Activated CD8-positive, alpha-beta T cell treated with anti-CD3 and anti-CD28 coated beads, Interleukin-2, amount 10 ng/mL, durations not matched to agents 7 days and 5 days (primary cell): ENCODE measurements at regions of chr9 and their contacts with region 1.

Region 1: DNA sequence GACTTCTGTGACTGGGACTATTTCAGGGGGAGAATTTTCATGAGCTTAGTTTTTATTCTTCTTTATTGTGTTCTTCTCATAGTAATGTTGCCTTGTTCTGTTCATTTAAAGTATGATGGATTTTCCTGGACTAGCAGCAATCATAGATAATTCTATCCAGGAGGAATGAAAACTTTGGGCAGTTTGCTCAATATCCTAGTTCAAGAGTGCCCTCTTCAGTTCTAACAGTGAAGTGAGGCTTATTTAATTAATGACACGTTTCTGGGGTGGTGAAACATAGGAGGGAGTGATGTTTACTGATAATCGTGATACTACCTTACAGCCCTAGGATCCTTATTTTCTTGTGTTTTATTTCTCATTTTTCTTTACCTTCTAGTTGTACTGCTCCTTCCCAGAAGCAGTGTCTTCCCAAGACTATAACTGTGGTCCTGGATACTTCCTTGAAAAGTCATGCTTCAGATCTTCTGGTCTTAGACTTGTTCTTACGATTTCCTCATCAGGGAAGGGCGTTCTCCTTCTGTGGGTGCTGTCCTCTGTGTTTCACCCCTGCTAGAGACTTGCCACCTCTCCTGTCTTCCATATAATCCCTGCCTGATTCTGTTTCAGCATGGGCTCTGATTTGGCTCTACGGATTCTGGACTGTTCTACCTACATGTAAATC is 57.4 kb downstream of the CFAP95 start:
- DNase-seq: no peak
- ATAC-seq: no peak
- H3K4me3 Mint-ChIP-seq: no peak overlapping the region
- H3K27ac Mint-ChIP-seq: no peak overlapping the region
- H3K4me1 Mint-ChIP-seq: no peaks in the 10 kb centered on the region
- H3K27me3 Mint-ChIP-seq: peaks cover 8% of the 10 kb centered on the region

Region 2: DNA sequence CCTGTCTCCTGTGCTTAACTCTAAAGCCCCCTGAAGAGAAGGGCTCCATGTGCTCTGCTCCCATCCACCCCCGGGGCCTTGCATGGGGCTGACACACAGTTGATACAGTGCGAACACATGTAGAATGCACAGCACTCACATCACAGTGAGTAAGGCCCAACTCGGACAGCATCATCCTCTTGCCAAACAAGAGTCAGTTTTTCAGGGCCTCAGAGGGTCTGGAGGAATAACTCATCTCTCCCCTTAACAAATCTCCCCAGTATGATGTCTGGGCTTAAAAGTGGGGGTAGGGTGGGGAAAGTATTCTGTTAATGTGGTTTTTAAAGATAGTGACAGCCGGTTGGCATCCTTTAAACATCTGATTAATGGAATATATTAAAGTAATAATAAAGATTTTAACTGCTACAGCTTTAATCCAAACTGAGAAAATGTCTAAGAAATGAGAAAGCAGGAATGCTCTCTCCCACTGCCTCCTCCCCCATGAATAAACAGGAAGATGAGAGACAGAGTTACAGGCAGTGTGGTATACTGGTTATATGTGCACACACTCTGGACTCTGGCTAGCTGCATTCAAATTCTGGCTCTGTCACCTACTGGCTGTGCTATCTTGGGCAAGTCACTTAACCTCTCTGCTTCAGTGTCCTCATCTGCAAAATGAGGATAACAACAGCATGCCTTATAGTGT is 228.3 kb before region 1 on chr9:
- CTCF ChIA-PET with region 1: no interaction called
- POLR2A ChIA-PET with region 1: no interaction called
- DNase-seq: no peak
- ATAC-seq: no peak
- H3K4me3 Mint-ChIP-seq: no peak overlapping the region
- H3K27ac Mint-ChIP-seq: no peak overlapping the region
- H3K4me1 Mint-ChIP-seq: peaks cover 3% of the 10 kb centered on the region
- H3K27me3 Mint-ChIP-seq: peaks cover 15% of the 10 kb centered on the region

Region 3: GRCh38 chr9:69672596-69673310 is 205.2 kb before region 1 on chr9:
- CTCF ChIA-PET with region 1: interaction called, 11 read pairs
- POLR2A ChIA-PET with region 1: no interaction called
- DNase-seq: peak; percentile 80
- ATAC-seq: peak; percentile 96
- H3K4me3 Mint-ChIP-seq: peak overlapping the region; percentile 73
- H3K27ac Mint-ChIP-seq: no peak overlapping the region
- H3K4me1 Mint-ChIP-seq: peaks cover 15% of the 10 kb centered on the region
- H3K27me3 Mint-ChIP-seq: peaks cover 31% of the 10 kb centered on the region